Heart right ventricle (tissue), 16 donors: ENCODE measurements at regions of chr3 and their contacts with region 1.

Region 1: GRCh38 chr3:128095222-128095703 is 28.3 kb downstream of the RUVBL1 start:
- DNase-seq: peak; percentile 80 to 82
- ATAC-seq: peak; percentile 91 to 98 (median 96)
- H3K4me3 ChIP-seq: no peak overlapping the region
- H3K27ac ChIP-seq: peak overlapping the region in 2 of 10 donors; percentile 9 to 45
- H3K4me1 ChIP-seq: peaks cover 0 to 18% (median 5%) of the 10 kb centered on the region in 9 donors
- H3K27me3 ChIP-seq: no peaks in the 10 kb centered on the region
- CTCF ChIP-seq: peak; percentile 61 to 89 (median 82)

Region 2: GRCh38 chr3:128322066-128323022 is 227.1 kb after region 1 on chr3:
- intact Hi-C with region 1: loop called in 2 of 10 experiments (anchors 10 kb)
- DNase-seq: peak; percentile 42
- ATAC-seq: peak in 6 of 8 donors; percentile 19 to 64 (median 58)
- H3K4me3 ChIP-seq: no peak overlapping the region
- H3K27ac ChIP-seq: no peak overlapping the region
- H3K4me1 ChIP-seq: peaks cover 0 to 8% (median 0%) of the 10 kb centered on the region in 9 donors
- H3K27me3 ChIP-seq: no peaks in the 10 kb centered on the region
- CTCF ChIP-seq: peak in 8 of 9 donors; percentile 40 to 72 (median 64)

Region 3: GRCh38 chr3:128497387-128498126 is 402.3 kb after region 1 on chr3:
- intact Hi-C with region 1: loop called in 9 of 10 experiments (anchors 5 to 10 kb)
- DNase-seq: peak; percentile 76 to 78
- ATAC-seq: peak; percentile 66 to 88 (median 82)
- H3K4me3 ChIP-seq: peak overlapping the region; percentile 32 to 65 (median 55)
- H3K27ac ChIP-seq: peak overlapping the region in 2 of 10 donors; percentile 6 to 55
- H3K4me1 ChIP-seq: peaks cover 2 to 31% (median 27%) of the 10 kb centered on the region in 9 donors
- H3K27me3 ChIP-seq: peaks cover 3 to 89% (median 47%) of the 10 kb centered on the region in 7 donors
- CTCF ChIP-seq: peak; percentile 57 to 90 (median 81)

Region 4: GRCh38 chr3:128584412-128585020 is 489.3 kb after region 1 on chr3:
- intact Hi-C with region 1: loop called in 1 of 10 experiments (anchors 10 kb)
- DNase-seq: peak; percentile 74 to 75
- ATAC-seq: peak; percentile 94 to 100 (median 98)
- H3K4me3 ChIP-seq: no peak overlapping the region
- H3K27ac ChIP-seq: no peak overlapping the region
- H3K4me1 ChIP-seq: peaks cover 0 to 11% (median 3%) of the 10 kb centered on the region in 9 donors
- H3K27me3 ChIP-seq: peaks cover 0 to 4% (median 0%) of the 10 kb centered on the region in 7 donors
- CTCF ChIP-seq: peak; percentile 44 to 84 (median 74)

Region 5: DNA sequence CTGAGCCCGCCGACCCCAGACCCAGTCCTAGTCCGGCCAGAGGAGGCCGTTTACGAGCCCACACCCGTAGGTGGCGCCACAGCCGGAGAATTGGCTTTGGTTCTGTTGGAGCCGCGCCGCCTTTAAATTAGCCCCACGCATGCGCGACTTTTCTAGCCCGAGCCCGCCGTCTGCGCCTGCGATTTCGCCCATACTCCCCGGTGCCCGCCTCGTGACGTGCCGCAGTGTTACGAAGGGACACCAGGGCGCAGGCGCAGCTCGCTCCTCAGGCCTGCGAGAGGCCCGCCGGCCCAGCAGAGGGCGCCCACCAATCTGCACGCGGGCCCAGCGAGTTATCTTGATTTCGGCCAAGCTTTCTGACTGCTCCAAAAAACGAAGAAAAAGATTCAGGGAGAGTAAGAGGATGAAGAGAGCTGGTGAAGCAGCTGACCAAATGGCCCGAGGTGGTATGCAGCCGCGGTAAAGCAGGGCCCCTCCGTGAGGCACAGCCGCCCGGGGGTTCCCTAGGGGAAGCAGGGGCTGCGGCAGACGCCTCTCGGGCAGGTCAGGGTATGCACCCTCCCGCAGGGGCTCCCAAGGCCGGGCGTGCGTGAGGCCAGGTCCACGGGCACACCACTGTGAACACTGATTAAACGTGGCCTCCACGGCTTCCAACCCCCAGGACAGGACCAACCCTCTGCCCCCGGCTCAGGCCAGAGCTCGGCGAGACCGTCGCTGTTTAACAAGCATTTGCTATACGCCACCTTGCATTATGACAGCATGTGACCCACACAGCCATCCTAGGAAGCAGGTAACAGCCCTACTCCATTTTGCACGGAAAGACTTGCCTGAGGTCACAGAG is 522.5 kb after region 1 on chr3:
- intact Hi-C with region 1: loop called in 1 of 10 experiments (anchors 10 kb)
- DNase-seq: peak; percentile 97 to 99
- ATAC-seq: peak; percentile 94 to 99 (median 98)
- H3K4me3 ChIP-seq: peak overlapping the region; percentile 63 to 95 (median 80)
- H3K27ac ChIP-seq: peak overlapping the region; percentile 41 to 90 (median 84)
- H3K4me1 ChIP-seq: peaks cover 10 to 33% (median 22%) of the 10 kb centered on the region in 9 donors
- H3K27me3 ChIP-seq: no peaks in the 10 kb centered on the region
- CTCF ChIP-seq: peak; percentile 87 to 99 (median 98)